ENCODE measurements at regions of chr10 and their contacts with region 1.

Region 1: DNA sequence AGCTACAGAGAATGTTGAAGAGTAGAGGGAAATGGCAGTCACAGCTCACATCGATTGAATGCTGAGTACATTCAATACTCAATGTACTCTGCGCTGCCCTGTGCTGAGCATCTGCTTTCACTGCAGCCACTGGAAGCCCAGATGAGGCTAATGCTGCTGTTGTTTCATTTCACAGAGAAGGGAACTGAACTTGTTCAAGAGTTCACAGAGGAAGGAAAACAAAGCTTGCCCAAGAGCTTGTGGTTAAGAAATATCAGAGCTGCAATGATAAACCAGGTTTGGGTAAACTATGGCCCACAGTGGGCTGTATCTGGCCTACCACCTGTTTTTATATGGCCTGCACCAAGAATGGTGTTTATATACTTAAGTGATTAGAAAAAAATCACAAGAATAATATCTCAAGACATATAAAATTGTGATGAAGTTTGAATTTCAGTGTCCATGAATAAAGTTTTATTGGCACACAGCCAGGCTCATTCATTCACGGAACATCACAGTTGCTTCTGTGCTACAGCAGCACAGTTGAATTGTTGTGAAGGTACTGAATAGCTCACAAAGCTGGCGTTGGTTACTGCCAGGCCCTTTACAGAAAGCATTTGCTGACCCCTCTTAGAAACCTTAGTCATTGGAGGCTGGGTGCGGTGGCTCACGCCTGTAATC is 64.1 kb downstream of the CFAP58 start:
- DNase-seq: no peak
- ATAC-seq: no peak
- H3K4me3 ChIP-seq: no peak overlapping the region
- H3K27ac ChIP-seq: no peak overlapping the region
- H3K4me1 ChIP-seq: peaks cover 3% of the 10 kb centered on the region
- H3K27me3 ChIP-seq: no peaks in the 10 kb centered on the region

Region 2: DNA sequence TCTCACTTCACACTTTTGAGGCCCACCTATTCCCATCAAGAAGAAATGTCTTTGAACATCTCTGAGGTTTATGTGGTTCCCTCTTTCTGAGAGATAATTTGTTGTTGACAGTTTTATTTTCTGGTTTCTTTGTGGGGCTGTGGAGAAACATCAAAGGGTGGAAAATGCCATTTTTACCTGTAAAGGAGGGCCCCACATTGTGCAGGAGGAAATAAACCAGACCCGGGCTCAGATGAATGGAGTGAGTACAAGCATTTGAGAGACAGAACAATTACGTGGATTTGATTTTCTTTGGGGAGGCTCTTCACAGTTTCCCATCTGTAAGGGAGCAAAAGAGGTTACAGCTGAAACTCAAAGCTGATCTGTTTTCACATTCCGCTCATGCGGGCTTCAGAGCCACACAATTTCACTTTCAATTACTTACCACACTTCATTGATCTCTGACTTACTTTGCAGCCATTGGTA is 109.3 kb before region 1 on chr10:
- intact Hi-C with region 1: no loop called
- DNase-seq: no peak
- ATAC-seq: no peak
- H3K4me3 ChIP-seq: no peak overlapping the region
- H3K27ac ChIP-seq: peak overlapping the region; percentile 12
- H3K4me1 ChIP-seq: peaks cover 34% of the 10 kb centered on the region
- H3K27me3 ChIP-seq: no peaks in the 10 kb centered on the region

Region 3: DNA sequence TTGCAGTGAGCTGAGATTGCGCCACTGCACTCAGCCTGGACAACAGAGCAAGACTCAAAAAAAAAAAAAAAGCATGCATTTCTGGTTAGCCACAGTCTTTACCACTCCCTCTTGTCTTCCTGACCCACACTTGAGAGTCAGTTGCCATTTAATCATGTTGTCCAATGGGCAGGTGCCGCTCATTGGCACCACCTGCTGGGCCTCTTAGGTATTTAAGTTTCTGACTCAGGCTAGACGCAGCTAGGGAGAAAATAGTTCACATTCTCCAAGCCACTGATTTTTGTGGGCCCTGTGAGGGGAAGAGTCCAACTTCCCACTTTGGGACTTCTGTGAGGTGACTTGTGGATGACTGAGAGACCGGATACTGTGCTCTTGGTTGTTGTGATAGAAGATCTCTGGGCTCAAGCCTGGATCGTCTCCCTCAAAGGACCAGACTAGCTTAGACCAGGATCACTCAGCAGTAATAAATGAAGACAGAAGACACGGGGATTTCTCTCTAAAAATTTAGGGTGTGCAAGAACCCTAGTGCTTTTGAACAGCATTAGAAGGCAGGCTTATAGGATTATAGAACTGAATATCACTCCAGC is 196.6 kb after region 1 on chr10:
- intact Hi-C with region 1: loop called in 1 of 4 experiments (anchors 10 kb)
- DNase-seq: no peak
- ATAC-seq: no peak
- H3K4me3 ChIP-seq: no peak overlapping the region
- H3K27ac ChIP-seq: no peak overlapping the region
- H3K4me1 ChIP-seq: no peaks in the 10 kb centered on the region
- H3K27me3 ChIP-seq: no peaks in the 10 kb centered on the region